IMR-90 (cell line): ENCODE measurements at regions of chr5 and their contacts with region 1.

Region 1: DNA sequence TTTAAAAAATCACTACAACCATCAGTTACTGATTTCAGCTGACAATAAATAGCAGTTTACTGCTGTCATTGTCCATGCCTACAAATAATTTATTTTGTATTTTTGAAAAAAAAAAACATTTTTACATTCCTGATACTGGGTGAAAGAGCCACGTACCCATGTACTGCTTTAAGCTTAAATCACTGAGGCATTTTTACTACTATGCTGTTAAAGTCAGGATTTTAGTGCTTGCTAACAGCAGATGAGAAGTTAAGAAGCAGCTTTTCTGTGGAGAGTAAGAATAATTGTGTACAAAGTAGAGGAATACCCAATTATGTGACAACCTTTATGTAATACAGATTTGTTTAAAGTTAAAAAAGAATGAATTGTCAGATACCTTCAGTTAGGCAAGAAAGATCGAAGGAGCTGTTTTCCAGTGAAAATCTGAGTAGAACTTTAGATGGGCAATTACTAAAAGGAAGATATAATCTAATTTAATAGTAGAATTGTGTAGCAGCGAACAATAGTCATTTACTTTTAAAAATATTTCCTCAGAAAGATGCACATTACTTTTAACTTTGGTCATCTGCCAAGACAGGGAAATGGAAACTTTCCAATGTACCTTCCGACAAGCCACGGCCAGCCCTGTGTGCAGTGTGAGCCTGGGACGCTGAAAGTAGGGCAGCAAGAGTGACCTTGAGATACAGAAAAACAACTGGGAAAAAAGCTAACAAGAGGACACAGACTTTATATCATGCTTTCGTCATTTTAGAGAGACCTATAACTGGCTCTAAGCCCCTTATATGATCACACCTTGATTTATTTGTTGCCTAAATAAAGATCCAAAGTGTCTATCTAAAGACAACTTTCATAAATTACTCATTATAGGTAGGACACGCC is 39.9 kb downstream of the RHOBTB3 start:
- DNase-seq: no peak
- ATAC-seq: no peak
- H3K4me3 ChIP-seq: no peak overlapping the region
- H3K27ac ChIP-seq: no peak overlapping the region; the same call in 1 of the 2 replicates
- H3K4me1 ChIP-seq: peaks cover 9% of the 10 kb centered on the region
- H3K27me3 ChIP-seq: no peaks in the 10 kb centered on the region
- CTCF ChIP-seq: no peak
- POLR2A ChIP-seq: no peak
- RAD21 ChIP-seq: no peak

Region 2: GRCh38 chr5:94802450-94802849 is 968.6 kb before region 1 on chr5:
- CTCF ChIA-PET with region 1: no interaction called
- POLR2A ChIA-PET with region 1: no interaction called
- dilution Hi-C with region 1: no loop called
- in situ Hi-C with region 1: no loop called
- intact Hi-C with region 1: no loop called
- DNase-seq: peak; percentile 3
- ATAC-seq: no peak
- H3K4me3 ChIP-seq: no peak overlapping the region
- H3K27ac ChIP-seq: no peak overlapping the region
- H3K4me1 ChIP-seq: no peaks in the 10 kb centered on the region
- H3K27me3 ChIP-seq: no peaks in the 10 kb centered on the region
- CTCF ChIP-seq: no peak
- POLR2A ChIP-seq: no peak
- RAD21 ChIP-seq: no peak

Region 3: DNA sequence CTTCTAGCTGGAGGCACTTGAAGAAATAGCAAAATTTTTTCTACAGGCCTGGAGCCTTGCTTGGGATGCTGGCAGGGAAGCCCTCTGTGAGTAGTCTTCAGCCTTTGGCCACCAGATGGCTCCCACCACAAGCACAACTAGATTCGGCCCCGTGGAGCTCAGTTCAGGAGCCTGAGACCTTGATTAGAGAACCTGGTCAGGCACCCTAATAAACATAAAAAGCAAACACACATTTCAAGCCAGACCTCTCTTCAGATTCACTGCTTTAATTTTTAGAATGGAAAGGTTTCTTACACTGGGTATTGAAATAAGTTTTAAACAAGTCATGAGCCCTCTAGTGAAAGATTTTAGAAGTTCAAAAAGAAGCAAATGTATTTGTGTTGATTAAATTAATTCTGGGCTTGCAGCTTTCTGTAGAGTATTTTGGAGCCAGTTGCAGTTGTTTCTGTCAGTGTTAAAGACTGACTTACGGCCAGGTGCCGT is 10.1 kb after region 1 on chr5:
- CTCF ChIA-PET with region 1: interaction called, 15 read pairs
- POLR2A ChIA-PET with region 1: interaction called, 4 read pairs
- dilution Hi-C with region 1: no loop called
- in situ Hi-C with region 1: no loop called
- intact Hi-C with region 1: no loop called
- DNase-seq: peak; percentile 85
- ATAC-seq: peak; percentile 75
- H3K4me3 ChIP-seq: no peak overlapping the region
- H3K27ac ChIP-seq: no peak overlapping the region; the same call in 1 of the 2 replicates
- H3K4me1 ChIP-seq: peaks cover 22% of the 10 kb centered on the region
- H3K27me3 ChIP-seq: no peaks in the 10 kb centered on the region
- CTCF ChIP-seq: peak; percentile 82
- POLR2A ChIP-seq: no peak; the same call in 1 of the 2 replicates
- RAD21 ChIP-seq: peak; percentile 83

Region 4: DNA sequence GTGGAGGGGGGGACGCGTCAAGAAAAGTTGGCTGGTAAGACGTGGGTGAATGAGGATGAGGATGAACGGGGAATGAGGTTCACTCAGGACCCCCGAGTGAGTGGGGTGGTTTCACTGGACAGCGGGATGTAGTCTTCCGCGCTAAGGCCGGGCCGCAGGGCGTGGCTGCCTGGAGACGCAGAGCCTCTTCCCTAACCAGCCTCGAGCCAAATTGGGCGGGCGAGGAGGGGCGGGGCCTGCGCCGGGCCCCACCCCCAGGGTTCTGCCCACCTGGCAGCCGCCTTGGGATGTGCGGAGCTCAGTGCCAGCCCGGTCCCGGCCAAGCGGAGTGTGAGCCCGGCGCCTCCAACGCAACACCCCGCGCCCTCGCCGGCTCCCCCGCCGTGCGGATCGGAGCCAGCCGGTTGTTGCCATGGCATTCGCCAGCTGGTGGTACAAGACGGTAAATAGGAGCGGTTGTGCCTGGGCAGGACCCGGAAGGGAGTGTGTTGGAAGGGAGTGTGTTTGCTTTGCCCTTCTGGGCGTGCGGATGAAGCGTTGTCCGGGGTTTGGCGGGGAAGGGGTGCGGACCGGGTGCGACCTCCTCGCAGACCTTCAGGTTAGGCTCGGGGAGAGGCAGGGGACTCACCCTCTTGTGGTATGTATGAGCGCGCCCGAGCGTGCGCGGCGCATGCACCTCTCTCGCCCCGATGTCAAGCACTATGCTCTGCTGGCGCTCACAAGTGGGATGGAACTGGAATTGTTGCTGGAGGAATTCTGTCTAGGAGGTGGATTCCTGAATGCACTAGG is 891.9 kb after region 1 on chr5:
- CTCF ChIA-PET with region 1: no interaction called
- POLR2A ChIA-PET with region 1: no interaction called
- dilution Hi-C with region 1: no loop called
- in situ Hi-C with region 1: no loop called
- intact Hi-C with region 1: no loop called
- DNase-seq: peak; percentile 79
- ATAC-seq: peak; percentile 86
- H3K4me3 ChIP-seq: peak overlapping the region; percentile 92
- H3K27ac ChIP-seq: peak overlapping the region; percentile 90
- H3K4me1 ChIP-seq: peaks cover 1% of the 10 kb centered on the region; the same call in 1 of the 2 replicates
- H3K27me3 ChIP-seq: no peaks in the 10 kb centered on the region
- CTCF ChIP-seq: no peak
- POLR2A ChIP-seq: peak; percentile 58; the same call in 1 of the 2 replicates
- RAD21 ChIP-seq: no peak